ENCODE measurements at regions of chr1 and their contacts with region 1.

Region 1: GRCh38 chr1:110605901-110606656 is at the start of gene KCNA2:
- DNase-seq: no peak
- H3K27ac ChIP-seq: no peak within 1 kb of the TSS
- CTCF ChIP-seq: no peak

Region 2: DNA sequence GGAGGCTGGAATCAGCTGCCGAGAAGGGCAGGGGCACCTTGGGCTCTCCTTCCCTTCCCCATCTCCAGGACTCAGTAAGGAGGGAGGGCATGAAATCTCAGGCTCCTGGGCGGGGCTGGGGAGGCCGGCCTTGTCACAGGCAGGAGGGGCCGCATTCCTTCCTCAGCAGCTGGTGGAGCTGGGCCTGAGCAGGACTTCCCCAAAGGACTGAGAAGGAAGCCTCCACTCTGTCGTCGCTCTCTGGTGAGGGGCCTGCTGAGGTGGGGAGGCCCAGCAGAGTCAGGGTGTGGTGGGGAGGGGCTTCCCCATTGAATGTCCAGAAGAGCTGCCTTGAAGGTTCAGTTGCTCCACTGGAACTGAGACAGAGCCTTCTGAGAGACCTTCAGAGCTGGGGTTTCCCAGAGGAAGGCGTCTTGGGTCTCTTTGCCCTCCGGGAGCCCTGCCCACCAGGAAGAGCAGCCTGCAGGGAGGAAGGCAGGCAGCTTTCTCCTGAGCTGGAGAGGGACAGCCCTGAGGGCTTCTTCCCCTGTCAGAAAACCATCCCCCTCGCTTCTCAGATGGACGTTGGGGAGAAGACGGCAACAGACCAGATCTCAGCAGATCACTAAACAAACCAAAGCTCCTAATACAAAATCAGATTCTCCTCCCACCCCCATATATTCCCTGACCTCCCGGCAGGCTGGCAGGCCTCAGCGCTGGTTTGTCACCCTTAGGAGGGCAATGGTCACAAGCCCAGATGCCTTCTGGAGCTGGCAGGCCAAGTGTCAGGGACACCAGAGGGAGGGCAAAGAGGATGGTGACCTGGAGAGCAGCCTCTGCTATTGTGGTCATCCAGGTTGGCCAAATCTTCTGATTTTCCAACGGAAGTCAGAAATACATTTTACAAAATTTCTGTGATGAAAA is 97.8 kb before region 1 on chr1:
- CTCF ChIA-PET with region 1: no interaction called
- POLR2A ChIA-PET with region 1: no interaction called
- DNase-seq: no peak
- H3K27ac ChIP-seq: no peak overlapping the region
- CTCF ChIP-seq: no peak

Region 3: GRCh38 chr1:110549831-110550230 is 56.2 kb before region 1 on chr1:
- CTCF ChIA-PET with region 1: interaction called, 10 read pairs
- POLR2A ChIA-PET with region 1: no interaction called
- DNase-seq: no peak
- H3K27ac ChIP-seq: no peak overlapping the region
- CTCF ChIP-seq: no peak